ENCODE measurements at regions of chr20 and their contacts with region 1.

Region 1: DNA sequence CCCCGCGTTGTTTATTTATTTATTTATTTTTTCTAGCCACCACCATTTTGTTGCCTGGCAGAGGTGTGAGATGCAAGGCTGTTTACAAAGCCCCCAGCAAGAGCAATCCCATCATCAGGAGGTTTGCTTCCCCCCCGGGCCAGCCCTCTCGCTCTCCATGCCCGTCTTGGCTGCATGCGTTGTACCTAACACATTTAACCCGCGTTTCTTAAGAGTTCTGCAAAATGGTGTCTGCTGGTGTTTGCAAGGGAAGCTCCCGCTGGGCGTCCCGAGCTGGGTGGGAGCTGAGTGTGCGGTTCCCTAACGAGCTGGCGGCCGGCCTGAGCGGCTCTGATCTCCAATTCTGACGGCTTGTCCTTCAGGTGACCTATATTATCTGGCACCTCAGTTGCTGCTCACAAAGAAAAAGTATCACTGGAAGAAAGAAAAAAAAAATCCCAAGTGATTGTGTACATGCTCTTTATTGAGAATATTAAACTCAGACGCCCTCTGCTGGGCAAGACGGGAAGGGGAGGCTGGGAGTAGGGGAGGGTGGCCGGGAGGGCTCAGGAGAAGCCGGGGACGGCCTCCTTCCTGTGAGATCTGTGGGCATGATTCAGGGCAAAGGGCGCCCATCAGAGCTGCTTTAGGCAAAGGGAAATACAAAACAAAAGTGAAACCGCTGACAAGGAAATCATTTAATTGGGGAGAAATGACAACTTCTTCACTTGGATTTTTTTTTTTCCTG is 154.8 kb downstream of the BCAS1 start:
- DNase-seq: peak; percentile 76
- ATAC-seq: peak; percentile 88
- H3K4me3 Mint-ChIP-seq: peak overlapping the region; percentile 94
- H3K27ac Mint-ChIP-seq: peak overlapping the region; percentile 93
- H3K4me1 Mint-ChIP-seq: peaks cover 57% of the 10 kb centered on the region
- H3K27me3 Mint-ChIP-seq: no peaks in the 10 kb centered on the region
- CTCF ChIP-seq: no peak

Region 2: DNA sequence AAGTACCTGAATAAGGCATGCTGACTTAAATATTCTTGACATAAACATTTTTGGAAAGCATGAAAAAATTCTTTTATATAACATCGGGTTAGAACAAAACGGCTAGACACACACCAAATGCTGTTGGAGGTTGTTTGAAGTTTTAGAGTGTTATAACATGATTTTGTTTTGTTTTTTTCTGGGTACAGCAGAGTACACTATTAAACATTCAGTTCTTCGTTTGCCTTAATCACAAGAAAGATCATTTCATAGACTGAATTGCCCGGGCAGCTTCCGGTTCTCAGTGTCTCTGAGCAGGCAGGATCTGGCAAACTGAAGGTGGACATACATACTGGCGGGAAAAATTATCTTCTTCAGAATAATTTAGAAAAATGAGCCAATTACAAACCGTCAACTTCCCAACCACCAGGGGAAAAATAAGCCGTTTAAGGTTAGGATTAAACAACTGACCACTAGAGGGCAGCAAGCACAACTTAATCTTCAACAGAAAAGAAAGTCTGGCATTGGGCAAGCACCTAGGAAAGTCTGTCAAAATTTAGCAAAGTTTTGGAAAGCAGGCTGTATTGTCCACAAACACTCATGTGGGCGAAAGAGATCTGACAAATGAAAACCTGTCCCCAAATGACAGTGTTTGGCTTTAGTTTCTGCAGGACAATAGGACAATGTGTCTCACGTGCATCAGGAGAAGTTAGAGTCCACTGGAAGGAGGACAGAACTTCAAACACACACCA is 337.0 kb before region 1 on chr20:
- CTCF ChIA-PET with region 1: interaction called, 88 read pairs
- POLR2A ChIA-PET with region 1: interaction called, 6 read pairs
- intact Hi-C with region 1: loop called (anchors 1 kb)
- DNase-seq: no peak
- ATAC-seq: peak; percentile 58
- H3K4me3 Mint-ChIP-seq: peak overlapping the region; percentile 32
- H3K27ac Mint-ChIP-seq: peak overlapping the region; percentile 88
- H3K4me1 Mint-ChIP-seq: peaks cover 56% of the 10 kb centered on the region
- H3K27me3 Mint-ChIP-seq: no peaks in the 10 kb centered on the region
- CTCF ChIP-seq: no peak

Region 3: DNA sequence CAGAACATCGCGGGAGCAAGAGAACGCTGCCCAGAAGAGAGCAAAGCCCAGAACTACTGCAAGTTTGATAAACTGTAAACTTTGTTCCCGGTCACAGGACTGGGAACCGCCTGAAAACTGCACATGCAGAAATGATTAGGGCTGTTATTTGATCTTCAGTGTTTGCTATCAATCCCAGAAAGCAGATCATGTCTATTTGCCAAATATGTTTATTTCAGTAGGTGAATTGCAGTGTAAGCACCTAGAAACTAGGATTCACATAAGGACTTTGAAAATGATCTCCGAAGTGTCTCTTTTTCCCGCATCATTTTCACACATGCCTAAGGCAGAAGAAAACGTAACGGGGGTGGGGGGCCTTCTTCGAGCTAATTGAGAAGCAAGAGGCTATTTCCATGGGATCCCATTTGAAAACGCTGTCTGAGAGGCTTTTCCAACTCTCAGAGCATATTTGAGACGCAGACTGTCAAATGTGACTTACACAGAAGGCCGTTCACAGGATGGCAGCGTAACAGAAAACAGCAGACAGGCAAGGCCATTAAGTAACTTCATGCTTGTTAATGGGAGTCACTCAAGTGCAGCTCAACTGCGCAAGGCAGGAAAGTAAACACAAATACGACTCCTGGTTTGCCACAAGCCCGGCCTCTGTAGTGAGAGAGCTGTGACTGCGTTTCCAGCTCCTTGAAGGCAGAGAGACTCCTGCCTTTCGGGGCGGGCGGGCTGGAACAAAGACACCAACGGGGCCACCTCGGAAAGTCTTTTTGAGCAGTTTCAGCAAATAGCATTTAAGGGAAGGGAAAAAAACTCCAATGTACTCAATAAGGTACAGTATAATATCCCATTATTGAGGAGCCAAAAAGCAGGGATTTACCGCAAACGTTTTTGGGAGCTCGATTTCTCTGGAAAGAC is 177.3 kb before region 1 on chr20:
- CTCF ChIA-PET with region 1: interaction called, 3 read pairs
- POLR2A ChIA-PET with region 1: interaction called, 6 read pairs
- intact Hi-C with region 1: loop called (anchors 5 kb)
- DNase-seq: no peak
- ATAC-seq: no peak
- H3K4me3 Mint-ChIP-seq: peak overlapping the region; percentile 74
- H3K27ac Mint-ChIP-seq: peak overlapping the region; percentile 97
- H3K4me1 Mint-ChIP-seq: peaks cover 78% of the 10 kb centered on the region
- H3K27me3 Mint-ChIP-seq: no peaks in the 10 kb centered on the region
- CTCF ChIP-seq: no peak

Region 4: DNA sequence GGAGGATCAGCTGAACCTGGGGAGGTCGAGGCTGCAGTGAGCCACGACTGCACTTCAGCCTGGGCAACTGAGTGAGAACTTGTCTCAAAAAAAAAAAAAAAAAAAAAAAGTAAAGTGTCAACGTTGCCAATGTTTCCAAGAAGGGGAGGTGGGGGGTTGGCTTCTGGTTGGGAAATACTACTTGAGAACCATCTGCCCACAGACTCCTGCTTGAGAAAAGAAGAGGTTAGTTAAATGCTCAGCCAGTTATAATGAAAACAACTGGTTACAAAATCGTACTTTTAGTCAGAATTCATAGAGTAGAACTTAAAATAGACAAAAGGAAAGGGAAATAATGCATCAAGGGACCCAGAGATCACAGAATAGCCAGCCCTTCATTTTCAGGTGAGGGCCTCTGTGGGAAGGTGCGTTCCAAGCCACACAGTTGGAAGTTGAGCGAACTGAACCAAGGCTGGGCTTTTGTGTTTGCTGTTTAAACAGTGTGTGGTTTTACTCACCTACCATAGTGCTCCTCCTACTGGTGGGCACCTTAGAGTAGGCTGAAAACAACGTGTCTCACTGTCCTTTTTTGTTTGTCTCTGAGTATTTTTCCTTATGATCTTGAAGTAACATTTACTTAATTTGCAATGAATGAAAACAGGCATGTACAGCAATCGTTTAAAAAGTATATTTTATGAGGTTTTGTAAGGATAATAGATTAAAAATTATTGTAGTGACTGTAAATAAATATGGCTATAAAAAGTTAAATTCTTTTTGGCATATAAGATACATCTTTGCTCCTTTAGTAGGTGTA is 45.9 kb before region 1 on chr20:
- CTCF ChIA-PET with region 1: interaction called, 32 read pairs
- POLR2A ChIA-PET with region 1: interaction called, 5 read pairs
- intact Hi-C with region 1: loop called (anchors 1 kb)
- DNase-seq: peak; percentile 27
- ATAC-seq: peak; percentile 80
- H3K4me3 Mint-ChIP-seq: peak overlapping the region; percentile 60
- H3K27ac Mint-ChIP-seq: peak overlapping the region; percentile 85
- H3K4me1 Mint-ChIP-seq: peaks cover 71% of the 10 kb centered on the region
- H3K27me3 Mint-ChIP-seq: no peaks in the 10 kb centered on the region
- CTCF ChIP-seq: no peak

Region 5: DNA sequence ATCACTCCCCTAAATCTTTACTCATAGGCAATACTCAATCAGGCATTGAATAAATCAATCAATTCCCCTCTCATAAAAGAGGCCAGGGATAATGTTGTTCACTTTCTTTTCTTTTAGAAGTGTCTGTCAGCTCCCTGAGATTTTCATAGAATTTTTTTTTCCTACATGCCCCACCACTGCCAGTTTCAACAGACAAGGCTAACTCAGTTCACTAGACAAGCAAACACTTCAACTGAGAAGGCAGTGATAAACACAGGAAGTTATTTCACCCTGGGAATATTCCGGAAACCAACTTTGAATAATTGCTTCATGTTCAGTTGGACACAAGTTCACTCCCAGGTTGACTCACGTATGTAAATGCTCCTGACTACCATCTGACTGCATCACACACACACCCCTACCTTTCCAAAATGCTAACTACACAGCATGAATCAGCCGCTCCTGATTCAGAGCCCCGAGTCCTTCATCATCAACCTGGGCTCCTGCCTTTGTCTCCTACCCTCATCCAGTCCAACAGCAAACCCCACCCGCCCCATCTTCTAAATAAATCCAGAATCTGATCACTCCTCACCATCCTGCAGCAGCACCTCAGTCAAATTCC is 10.9 kb after region 1 on chr20:
- CTCF ChIA-PET with region 1: interaction called, 58 read pairs
- POLR2A ChIA-PET with region 1: interaction called, 182 read pairs
- intact Hi-C with region 1: loop called (anchors 1 kb)
- DNase-seq: peak; percentile 34
- ATAC-seq: peak; percentile 83
- H3K4me3 Mint-ChIP-seq: peak overlapping the region; percentile 83
- H3K27ac Mint-ChIP-seq: peak overlapping the region; percentile 96
- H3K4me1 Mint-ChIP-seq: peaks cover 92% of the 10 kb centered on the region
- H3K27me3 Mint-ChIP-seq: no peaks in the 10 kb centered on the region
- CTCF ChIP-seq: no peak

Region 6: GRCh38 chr20:54062812-54063280 is 147.2 kb after region 1 on chr20:
- CTCF ChIA-PET with region 1: interaction called, 5 read pairs
- POLR2A ChIA-PET with region 1: no interaction called
- intact Hi-C with region 1: loop called (anchors 10 kb)
- DNase-seq: no peak
- ATAC-seq: no peak
- H3K4me3 Mint-ChIP-seq: no peak overlapping the region
- H3K27ac Mint-ChIP-seq: no peak overlapping the region
- H3K4me1 Mint-ChIP-seq: peaks cover 38% of the 10 kb centered on the region
- H3K27me3 Mint-ChIP-seq: no peaks in the 10 kb centered on the region
- CTCF ChIP-seq: no peak